PC-3 (cell line): ENCODE measurements at regions of chr9 and their contacts with region 1.

Region 1: DNA sequence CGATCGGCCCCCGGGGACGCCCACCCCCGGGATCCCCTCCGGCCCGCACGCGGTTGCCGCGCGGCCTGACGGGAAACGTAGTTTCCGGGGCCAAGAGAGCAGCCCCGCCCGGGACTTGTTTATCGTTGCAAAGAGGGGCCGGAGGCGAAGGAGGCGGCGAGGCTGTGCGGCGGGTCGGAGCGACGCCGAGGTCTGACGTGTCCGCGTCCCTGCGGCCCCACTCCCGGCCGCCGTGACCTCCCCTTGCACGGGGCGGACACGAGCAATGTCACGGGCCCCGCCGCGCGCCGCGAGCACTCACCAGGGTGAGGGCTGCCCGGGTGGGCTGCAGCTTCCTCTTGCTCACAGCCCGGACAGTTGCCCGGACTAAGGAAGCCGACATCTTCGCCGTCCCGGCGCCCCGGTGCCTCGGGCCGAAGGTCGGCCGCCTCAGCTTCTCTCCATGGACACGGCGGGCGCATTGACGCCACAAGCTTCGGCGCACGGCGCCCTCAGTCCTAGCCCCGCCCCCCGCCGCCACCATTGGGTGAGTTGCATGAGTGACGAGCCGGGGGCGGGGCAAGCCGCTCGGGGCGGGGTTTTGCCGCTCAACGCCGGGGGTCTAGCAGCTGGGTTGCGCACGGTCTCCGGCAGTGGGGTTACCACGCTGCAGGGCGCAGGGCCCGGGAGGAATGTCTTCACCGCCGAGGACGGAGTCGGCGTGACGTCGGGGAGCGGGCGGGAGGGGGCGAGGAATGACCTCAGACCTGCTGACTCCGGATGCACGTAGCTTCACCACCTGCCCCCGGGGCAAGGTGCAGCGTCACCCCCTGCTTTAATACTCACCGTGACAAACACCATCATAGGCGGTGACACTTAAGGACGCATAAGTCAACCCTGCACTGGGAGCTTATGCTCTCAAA is at the start of gene ISCA1:
- DNase-seq: peak; percentile 83
- ATAC-seq: peak; percentile 87
- H3K4me3 ChIP-seq: peak within 1 kb of the TSS; percentile 94
- H3K27ac ChIP-seq: peak within 1 kb of the TSS; percentile 81
- H3K4me1 ChIP-seq: peaks cover 13% of the 10 kb centered on the region
- H3K27me3 ChIP-seq: no peaks in the 10 kb centered on the region
- CTCF ChIP-seq: no peak
- total RNA-seq, gene ISCA1: 28.8 and 29.1 TPM in 2 replicates

Region 2: GRCh38 chr9:86222667-86223066 is 59.7 kb before region 1 on chr9:
- CTCF ChIA-PET with region 1: no interaction called
- POLR2A ChIA-PET with region 1: no interaction called
- intact Hi-C with region 1: no loop called
- DNase-seq: no peak
- ATAC-seq: no peak
- H3K4me3 ChIP-seq: no peak overlapping the region
- H3K27ac ChIP-seq: no peak overlapping the region
- H3K4me1 ChIP-seq: no peaks in the 10 kb centered on the region
- H3K27me3 ChIP-seq: no peaks in the 10 kb centered on the region
- CTCF ChIP-seq: no peak

Region 3: GRCh38 chr9:86324308-86324707 is 42.0 kb after region 1 on chr9:
- CTCF ChIA-PET with region 1: no interaction called
- POLR2A ChIA-PET with region 1: no interaction called
- intact Hi-C with region 1: loop called (anchors 5 kb)
- DNase-seq: no peak
- ATAC-seq: no peak
- H3K4me3 ChIP-seq: no peak overlapping the region
- H3K27ac ChIP-seq: peak overlapping the region; percentile 45; the same call in 1 of the 2 replicates
- H3K4me1 ChIP-seq: peaks cover 21% of the 10 kb centered on the region
- H3K27me3 ChIP-seq: no peaks in the 10 kb centered on the region
- CTCF ChIP-seq: no peak

Region 4: GRCh38 chr9:86741311-86742208 is 459.2 kb after region 1 on chr9:
- CTCF ChIA-PET with region 1: no interaction called
- POLR2A ChIA-PET with region 1: no interaction called
- intact Hi-C with region 1: no loop called
- DNase-seq: peak; percentile 83
- ATAC-seq: no peak
- H3K4me3 ChIP-seq: no peak overlapping the region
- H3K27ac ChIP-seq: peak overlapping the region; percentile 63
- H3K4me1 ChIP-seq: peaks cover 10% of the 10 kb centered on the region
- H3K27me3 ChIP-seq: no peaks in the 10 kb centered on the region
- CTCF ChIP-seq: no peak

Region 5: DNA sequence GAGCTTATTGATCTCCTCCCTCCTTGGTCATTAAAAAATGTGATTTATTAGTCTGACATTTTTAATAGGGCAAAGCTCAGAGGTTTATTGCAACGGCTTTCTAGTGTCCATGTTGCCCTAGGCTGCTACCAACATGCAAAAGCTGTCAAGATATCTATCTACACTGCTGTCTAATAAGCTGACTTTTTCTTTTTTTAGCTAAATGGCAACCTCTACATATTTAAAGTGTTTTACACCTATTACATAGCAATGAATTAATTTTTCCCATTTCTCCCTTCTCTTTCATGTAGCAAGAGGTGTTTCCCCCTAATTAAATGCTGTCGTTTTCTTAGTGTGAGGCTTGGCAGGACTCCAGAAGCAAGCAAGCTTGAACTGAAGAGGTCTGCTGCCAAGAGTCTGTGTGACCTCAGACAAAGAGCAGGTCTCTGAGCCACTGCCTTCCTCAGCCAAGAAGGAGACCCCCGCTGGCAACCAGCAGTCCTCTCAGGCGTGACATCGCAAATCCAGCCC is 585.5 kb after region 1 on chr9:
- CTCF ChIA-PET with region 1: no interaction called
- POLR2A ChIA-PET with region 1: no interaction called
- intact Hi-C with region 1: no loop called
- DNase-seq: no peak
- ATAC-seq: no peak
- H3K4me3 ChIP-seq: no peak overlapping the region
- H3K27ac ChIP-seq: no peak overlapping the region
- H3K4me1 ChIP-seq: no peaks in the 10 kb centered on the region
- H3K27me3 ChIP-seq: no peaks in the 10 kb centered on the region
- CTCF ChIP-seq: no peak

Region 6: GRCh38 chr9:87167163-87167562 is 884.8 kb after region 1 on chr9:
- CTCF ChIA-PET with region 1: no interaction called
- POLR2A ChIA-PET with region 1: no interaction called
- intact Hi-C with region 1: no loop called
- DNase-seq: no peak
- ATAC-seq: no peak
- H3K4me3 ChIP-seq: no peak overlapping the region
- H3K27ac ChIP-seq: no peak overlapping the region
- H3K4me1 ChIP-seq: no peaks in the 10 kb centered on the region
- H3K27me3 ChIP-seq: no peaks in the 10 kb centered on the region
- CTCF ChIP-seq: no peak